ENCODE measurements at regions of chr2 and their contacts with region 1.

Region 1: GRCh38 chr2:171416009-171416926 is 17.5 kb downstream of the METTL8 start:
- DNase-seq: peak; percentile 71
- H3K4me3 Mint-ChIP-seq: peak overlapping the region; percentile 9
- H3K27ac Mint-ChIP-seq: peak overlapping the region; percentile 91
- H3K4me1 Mint-ChIP-seq: peaks cover 34% of the 10 kb centered on the region
- H3K27me3 Mint-ChIP-seq: no peaks in the 10 kb centered on the region

Region 2: GRCh38 chr2:170928824-170929685 is 487.2 kb before region 1 on chr2 and contains the start of gene GORASP2:
- intact Hi-C with region 1: loop called (anchors 1 kb)
- DNase-seq: peak; percentile 98
- H3K4me3 Mint-ChIP-seq: peak within 1 kb of the TSS; percentile 92
- H3K27ac Mint-ChIP-seq: peak within 1 kb of the TSS; percentile 94
- H3K4me1 Mint-ChIP-seq: peaks cover 45% of the 10 kb centered on the region
- H3K27me3 Mint-ChIP-seq: no peaks in the 10 kb centered on the region
- total RNA-seq, gene GORASP2: 92.4 and 92.8 TPM in 2 replicates

Region 3: GRCh38 chr2:171086352-171087290 is 329.6 kb before region 1 on chr2:
- intact Hi-C with region 1: loop called (anchors 2 kb)
- DNase-seq: peak; percentile 33
- H3K4me3 Mint-ChIP-seq: peak overlapping the region; percentile 78
- H3K27ac Mint-ChIP-seq: peak overlapping the region; percentile 69
- H3K4me1 Mint-ChIP-seq: peaks cover 61% of the 10 kb centered on the region
- H3K27me3 Mint-ChIP-seq: no peaks in the 10 kb centered on the region

Region 4: GRCh38 chr2:171244970-171245782 is 171.1 kb before region 1 on chr2:
- intact Hi-C with region 1: loop called (anchors 5 kb)
- DNase-seq: no peak
- H3K4me3 Mint-ChIP-seq: no peak overlapping the region
- H3K27ac Mint-ChIP-seq: no peak overlapping the region
- H3K4me1 Mint-ChIP-seq: peaks cover 40% of the 10 kb centered on the region
- H3K27me3 Mint-ChIP-seq: peaks cover 3% of the 10 kb centered on the region

Region 5: GRCh38 chr2:171347591-171348032 is 68.7 kb before region 1 on chr2:
- intact Hi-C with region 1: loop called (anchors 2 kb)
- DNase-seq: no peak
- H3K4me3 Mint-ChIP-seq: no peak overlapping the region
- H3K27ac Mint-ChIP-seq: peak overlapping the region; percentile 11
- H3K4me1 Mint-ChIP-seq: peaks cover 24% of the 10 kb centered on the region
- H3K27me3 Mint-ChIP-seq: no peaks in the 10 kb centered on the region

Region 6: GRCh38 chr2:171433763-171434670 is 17.7 kb after region 1 on chr2 and contains the starts of genes DCAF17 and METTL8:
- intact Hi-C with region 1: loop called (anchors 2 kb)
- DNase-seq: peak; percentile 93
- H3K4me3 Mint-ChIP-seq: peak within 1 kb of the TSS; percentile 89
- H3K27ac Mint-ChIP-seq: peak within 1 kb of the TSS; percentile 91
- H3K4me1 Mint-ChIP-seq: peaks cover 32% of the 10 kb centered on the region
- H3K27me3 Mint-ChIP-seq: no peaks in the 10 kb centered on the region
- total RNA-seq, gene DCAF17: 22.6 and 23.7 TPM in 2 replicates
- total RNA-seq, gene METTL8: 38.2 and 39.9 TPM in 2 replicates

Measured in activated T-helper 2 cell treated with anti-CD3 and anti-CD28 coated beads, Interferon-gamma antibody, Interleukin-2, Interleukin-4, amounts not matched to agents 10 μg/mL and 5 μg/mL and 100 μg/mL, durations not matched to agents 14 hours and 24 hours and 36 hours (primary cell).